HEK293 (cell line): ENCODE measurements at regions of chr6 and their contacts with region 1.

Region 1: DNA sequence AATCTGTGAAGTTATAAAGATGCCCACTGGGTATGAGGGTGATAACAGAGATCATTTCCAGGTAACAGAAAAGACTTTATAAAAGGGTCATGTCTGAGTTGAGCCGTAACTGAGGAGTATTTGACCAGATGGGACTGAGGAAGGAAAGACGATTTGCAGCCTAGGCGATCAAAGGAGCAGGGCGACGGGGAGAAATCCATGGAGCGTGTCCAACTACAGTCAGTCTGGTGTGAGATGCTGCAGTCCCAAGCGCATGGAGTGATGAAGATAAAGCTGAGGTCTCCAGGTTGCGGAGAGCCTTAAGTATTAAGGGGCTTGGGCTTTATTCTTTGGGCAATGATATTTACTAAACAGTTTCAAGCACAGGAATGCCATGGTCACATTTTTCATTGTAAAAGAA is 166.7 kb downstream of the PRKN start:
- H3K4me3 ChIP-seq: no peak overlapping the region
- H3K27ac ChIP-seq: no peak overlapping the region
- H3K4me1 ChIP-seq: no peaks in the 10 kb centered on the region
- CTCF ChIP-seq: no peak

Region 2: DNA sequence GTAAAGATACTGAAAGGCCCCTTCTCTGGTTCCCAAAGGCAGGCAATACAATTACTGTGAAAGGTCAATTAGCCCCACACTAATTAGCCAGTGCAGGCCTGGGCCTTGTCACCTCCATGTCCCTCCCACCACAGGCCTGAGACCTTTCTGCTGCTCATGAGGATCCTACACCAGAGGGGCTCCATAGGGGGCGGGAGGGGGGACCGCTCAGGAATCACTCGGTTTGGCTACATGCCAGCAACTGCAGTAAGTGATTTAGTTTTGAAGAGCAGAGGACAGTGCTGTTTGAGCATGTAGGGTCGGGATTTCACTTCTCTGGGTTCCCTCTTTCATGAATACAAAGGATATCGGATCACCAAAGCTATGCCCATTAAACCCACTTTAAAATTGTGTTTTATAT is 289.0 kb before region 1 on chr6:
- CTCF ChIA-PET with region 1: interaction called, 11 read pairs
- POLR2A ChIA-PET with region 1: no interaction called
- H3K4me3 ChIP-seq: no peak overlapping the region
- H3K27ac ChIP-seq: no peak overlapping the region
- H3K4me1 ChIP-seq: no peaks in the 10 kb centered on the region
- CTCF ChIP-seq: no peak